Aorta (tissue), 5 donors: ENCODE measurements at regions of chrX and their contacts with region 1.

Region 1: DNA sequence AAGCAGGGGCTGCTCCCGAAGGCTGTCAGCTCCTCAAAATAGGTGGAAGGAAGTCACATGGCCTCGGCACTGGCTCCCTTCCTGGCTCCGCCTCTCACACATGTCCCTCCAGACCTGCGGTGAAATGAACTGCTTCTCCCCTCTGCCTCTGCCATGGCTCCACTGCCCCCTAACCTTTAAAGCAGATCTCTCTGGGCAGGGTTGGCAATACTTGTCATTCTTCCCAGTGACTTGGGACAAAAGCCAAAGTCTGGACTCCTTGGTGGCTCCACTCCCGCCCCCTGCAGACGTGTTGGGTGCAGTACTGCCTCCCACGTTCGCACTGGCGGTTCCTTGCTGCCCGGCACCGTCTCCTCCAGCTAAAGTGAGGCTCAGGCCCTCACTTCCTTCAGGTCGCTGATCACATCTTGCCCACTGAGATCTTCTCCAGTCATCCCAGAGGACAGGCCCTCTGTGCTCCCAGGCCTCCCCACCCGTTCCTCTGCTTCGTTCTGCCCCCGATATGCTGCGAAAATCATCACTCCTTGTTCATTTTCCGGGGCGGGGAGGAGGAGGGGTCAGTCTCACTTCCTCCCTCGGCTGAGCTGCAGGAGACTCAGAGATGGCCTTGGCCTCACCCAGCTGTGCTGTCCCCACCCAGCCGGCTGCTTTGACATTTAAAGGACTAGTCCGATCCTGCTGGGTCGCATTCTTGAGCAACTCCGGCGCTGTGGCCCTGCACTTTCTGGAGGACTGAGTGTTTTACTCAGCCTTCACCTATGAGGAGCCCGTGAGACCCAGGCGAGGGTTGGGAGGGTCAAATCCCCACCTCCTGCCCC is 97.4 kb downstream of the PHKA2 start:
- DNase-seq: peak; percentile 86 to 91
- ATAC-seq: peak; percentile 87
- H3K4me3 ChIP-seq: no peak overlapping the region
- H3K27ac ChIP-seq: peak overlapping the region; percentile 38 to 81
- H3K4me1 ChIP-seq: no peaks in the 10 kb centered on the region
- H3K27me3 ChIP-seq: no peaks in the 10 kb centered on the region

Region 2: GRCh38 chrX:18457000-18457399 is 429.6 kb before region 1 on chrX:
- intact Hi-C with region 1: no loop called
- DNase-seq: no peak
- ATAC-seq: no peak
- H3K4me3 ChIP-seq: no peak overlapping the region
- H3K27ac ChIP-seq: no peak overlapping the region
- H3K4me1 ChIP-seq: no peaks in the 10 kb centered on the region
- H3K27me3 ChIP-seq: no peaks in the 10 kb centered on the region

Region 3: DNA sequence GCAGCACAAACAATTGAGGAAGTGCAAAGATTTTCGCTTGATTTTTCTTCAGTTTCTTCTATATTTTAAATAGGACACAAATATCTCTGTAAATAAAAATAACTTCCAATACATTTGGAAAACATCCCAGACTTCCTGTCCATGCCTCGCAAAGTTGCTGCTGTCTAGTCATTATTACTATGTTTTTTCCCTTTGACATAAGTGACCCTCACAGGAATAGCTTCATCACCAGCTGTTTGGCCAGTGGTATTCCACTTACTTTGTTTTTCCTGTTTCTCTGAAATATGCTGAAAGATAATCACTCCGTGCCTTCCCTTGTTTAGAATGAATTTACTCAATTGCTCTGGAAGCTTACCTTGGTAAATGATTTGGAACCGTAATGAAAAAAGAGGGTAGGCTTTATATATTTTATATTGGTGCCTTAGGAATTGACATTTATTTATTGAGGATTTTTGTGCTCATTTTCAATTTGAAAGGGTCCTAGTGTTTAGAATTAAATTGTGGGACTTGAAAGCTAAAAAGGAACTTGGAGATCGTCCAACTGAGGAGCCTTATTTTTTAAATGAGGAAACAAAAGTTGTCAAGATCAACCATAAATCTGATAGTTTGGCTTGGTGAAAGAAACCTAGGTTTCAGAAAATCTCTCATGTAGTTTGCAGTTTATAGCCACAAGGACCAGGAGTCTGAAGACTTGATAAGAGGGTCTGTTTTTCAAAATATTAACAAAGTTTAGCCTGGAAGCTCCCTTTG is 395.6 kb before region 1 on chrX:
- intact Hi-C with region 1: no loop called
- DNase-seq: no peak
- ATAC-seq: no peak
- H3K4me3 ChIP-seq: no peak overlapping the region
- H3K27ac ChIP-seq: no peak overlapping the region
- H3K4me1 ChIP-seq: no peaks in the 10 kb centered on the region
- H3K27me3 ChIP-seq: no peaks in the 10 kb centered on the region

Region 4: DNA sequence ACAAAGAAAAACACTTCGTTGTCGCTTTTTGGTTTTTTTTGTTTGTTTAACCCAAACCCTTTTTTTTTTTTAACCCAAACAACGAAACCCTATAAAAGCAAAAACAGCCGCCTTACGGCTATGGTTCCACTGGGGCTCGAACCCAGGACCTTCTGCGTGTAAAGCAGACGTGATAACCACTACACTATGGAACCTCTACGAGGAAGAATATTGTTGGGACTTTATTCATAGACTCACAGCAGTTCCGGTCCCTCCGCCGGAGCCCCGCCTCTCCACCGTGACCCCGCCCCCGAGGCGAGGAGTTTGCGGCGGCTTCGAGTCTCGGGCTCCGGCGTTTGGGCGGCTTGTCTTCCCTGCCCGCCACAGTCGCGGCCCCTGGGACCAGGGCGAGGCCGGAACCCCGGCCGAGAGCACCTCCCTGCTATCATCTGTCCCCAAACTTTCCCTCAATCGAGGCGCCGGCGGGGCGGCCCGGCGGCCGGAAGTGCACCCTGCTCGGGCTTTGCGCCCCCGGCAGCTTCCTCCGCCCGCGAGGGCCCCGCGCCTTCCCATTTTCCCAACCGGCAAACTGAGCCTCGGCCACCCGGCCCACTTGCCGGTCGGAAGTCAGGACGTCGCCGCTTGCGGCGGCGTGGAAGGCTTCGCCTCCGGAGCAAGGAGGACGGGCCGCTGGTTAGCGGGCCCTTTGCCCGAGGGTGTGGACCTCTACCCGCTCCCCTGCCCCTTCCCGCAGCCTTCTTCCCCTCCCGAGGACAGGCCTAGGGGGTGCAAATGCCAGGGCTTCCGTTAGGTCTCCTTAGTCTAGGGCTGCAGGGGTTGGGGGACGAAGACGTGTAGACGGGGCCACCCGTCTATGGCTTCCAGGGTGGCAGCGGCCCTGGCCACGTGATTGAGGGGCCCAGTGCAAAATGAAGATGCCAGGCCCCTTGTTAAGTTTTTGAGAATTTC is 211.5 kb before region 1 on chrX:
- intact Hi-C with region 1: loop called in 1 of 2 experiments (anchors 5 kb)
- DNase-seq: peak; percentile 82 to 91
- ATAC-seq: peak; percentile 96
- H3K4me3 ChIP-seq: peak overlapping the region; percentile 54 to 92
- H3K27ac ChIP-seq: peak overlapping the region; percentile 49 to 94
- H3K4me1 ChIP-seq: peaks cover 0 to 2% of the 10 kb centered on the region in 2 donors
- H3K27me3 ChIP-seq: no peaks in the 10 kb centered on the region

Region 5: DNA sequence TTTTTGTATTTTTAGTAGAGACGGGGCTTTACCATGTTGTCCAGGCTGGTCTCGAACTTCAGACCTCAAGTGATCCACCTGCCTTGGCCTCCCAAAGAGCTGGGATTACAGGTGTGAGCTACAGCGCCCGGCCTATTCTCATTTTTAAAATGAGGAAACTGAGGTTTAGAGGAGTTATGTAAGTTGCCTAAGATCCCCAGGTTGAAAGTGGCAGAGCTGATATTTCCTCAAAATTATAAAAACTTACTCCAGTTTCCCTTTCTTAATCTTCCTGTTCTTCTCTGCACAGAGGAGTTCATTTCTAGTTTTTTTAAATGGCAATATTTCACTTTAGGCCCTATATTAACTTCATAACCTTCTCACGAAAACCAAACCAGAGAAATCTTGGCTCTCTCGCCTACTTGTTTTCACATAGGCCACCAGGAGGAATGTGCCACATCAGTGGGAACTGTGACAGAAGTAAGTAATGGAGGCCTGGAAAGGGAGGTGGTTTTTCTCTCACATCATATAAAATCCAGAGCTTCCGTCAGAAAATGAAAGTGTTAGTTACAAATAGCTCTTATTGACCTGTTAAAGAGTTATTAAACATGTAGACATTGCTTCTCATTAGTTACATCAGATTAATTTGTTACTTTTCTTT is 198.6 kb before region 1 on chrX:
- intact Hi-C with region 1: loop called in 1 of 2 experiments (anchors 5 kb)
- DNase-seq: no peak
- ATAC-seq: no peak
- H3K4me3 ChIP-seq: no peak overlapping the region
- H3K27ac ChIP-seq: no peak overlapping the region
- H3K4me1 ChIP-seq: no peaks in the 10 kb centered on the region
- H3K27me3 ChIP-seq: no peaks in the 10 kb centered on the region

Region 6: GRCh38 chrX:18833071-18833731 is 53.4 kb before region 1 on chrX:
- intact Hi-C with region 1: loop called in 1 of 2 experiments (anchors 10 kb)
- DNase-seq: peak in 1 of 2 donors; percentile 59
- ATAC-seq: peak; percentile 85
- H3K4me3 ChIP-seq: no peak overlapping the region
- H3K27ac ChIP-seq: peak overlapping the region in 1 of 2 donors; percentile 7
- H3K4me1 ChIP-seq: no peaks in the 10 kb centered on the region
- H3K27me3 ChIP-seq: no peaks in the 10 kb centered on the region